Psoas muscle (tissue), 8 donors: ENCODE measurements at regions of chr7 and their contacts with region 1.

Region 1: GRCh38 chr7:114759347-114760062 is 162.4 kb upstream of the MDFIC start:
- DNase-seq: no peak
- ATAC-seq: no peak
- H3K4me3 ChIP-seq: no peak overlapping the region
- H3K27ac ChIP-seq: no peak overlapping the region
- H3K4me1 ChIP-seq: no peaks in the 10 kb centered on the region
- H3K27me3 ChIP-seq: no peaks in the 10 kb centered on the region
- CTCF ChIP-seq: no peak

Region 2: GRCh38 chr7:115387137-115387536 is 627.6 kb after region 1 on chr7:
- intact Hi-C with region 1: loop called in 1 of 2 experiments (anchors 5 kb)
- DNase-seq: no peak
- ATAC-seq: no peak
- H3K4me3 ChIP-seq: no peak overlapping the region
- H3K27ac ChIP-seq: no peak overlapping the region
- H3K4me1 ChIP-seq: no peaks in the 10 kb centered on the region
- H3K27me3 ChIP-seq: no peaks in the 10 kb centered on the region
- CTCF ChIP-seq: no peak